ENCODE measurements at regions of chr1 and their contacts with region 1.

Region 1: DNA sequence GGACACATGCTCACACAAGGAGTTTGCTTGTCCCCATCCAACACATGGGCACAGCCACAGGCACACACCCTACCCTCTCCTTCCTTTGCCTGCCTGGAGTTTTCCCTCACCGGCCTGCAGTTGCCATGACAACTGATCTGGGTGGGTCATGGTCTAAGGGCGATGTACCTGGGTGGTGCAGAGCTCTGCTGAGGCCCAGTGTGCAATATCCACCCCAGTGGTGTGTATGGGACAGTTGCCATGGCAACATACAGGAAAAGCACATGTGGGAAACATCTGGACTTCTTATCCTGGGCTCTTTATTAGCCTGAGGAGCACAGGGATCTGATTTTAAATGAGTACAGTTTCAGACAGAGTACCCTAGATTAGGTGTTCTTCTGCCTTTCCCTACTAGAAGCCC is 98.8 kb downstream of the NAV1 start:
- DNase-seq: no peak
- ATAC-seq: peak; percentile 34

Region 2: DNA sequence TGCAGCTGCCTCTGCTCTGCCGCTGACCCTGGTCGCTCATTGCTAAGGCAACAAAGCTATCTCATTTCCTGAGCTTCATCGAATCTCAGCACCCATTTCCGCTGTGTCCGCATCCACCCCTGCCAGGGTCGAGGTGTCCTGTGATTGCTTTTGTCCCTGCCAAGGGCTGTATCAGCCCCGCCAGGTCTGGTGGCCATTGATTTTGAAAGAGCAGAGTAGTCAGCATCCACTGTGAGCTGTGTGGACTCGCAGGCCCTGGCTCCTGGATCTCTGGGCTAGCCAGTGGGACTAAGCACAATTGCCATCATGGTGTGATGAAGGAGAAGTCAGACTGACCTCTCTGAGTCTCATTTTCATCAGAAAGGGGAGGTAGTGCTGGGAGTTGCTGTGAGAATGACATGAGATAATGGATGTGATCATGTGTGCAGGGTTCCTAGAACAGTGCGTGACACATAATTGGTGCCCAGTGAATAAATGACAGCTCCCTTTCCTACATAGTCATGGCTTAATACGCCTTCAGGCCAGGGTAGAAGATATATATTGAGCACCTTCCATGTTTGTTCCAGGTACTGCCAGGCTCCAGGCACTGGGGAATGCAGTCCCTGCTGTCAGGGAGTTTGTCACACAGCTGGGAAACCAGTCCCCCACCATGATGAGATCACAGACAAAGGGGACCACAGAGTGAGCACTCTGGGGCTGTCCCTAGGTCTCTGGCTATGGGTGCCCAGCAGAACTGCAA is 66.6 kb before region 1 on chr1:
- intact Hi-C with region 1: no loop called
- DNase-seq: no peak
- ATAC-seq: peak; percentile 45

Region 3: GRCh38 chr1:201696217-201696761 is 58.6 kb after region 1 on chr1:
- intact Hi-C with region 1: loop called (anchors 10 kb)
- DNase-seq: peak; percentile 94
- ATAC-seq: peak; percentile 88